Upper lobe of right lung (tissue), 1 donor: ENCODE measurements at regions of chr5 and their contacts with region 1.

Region 1: DNA sequence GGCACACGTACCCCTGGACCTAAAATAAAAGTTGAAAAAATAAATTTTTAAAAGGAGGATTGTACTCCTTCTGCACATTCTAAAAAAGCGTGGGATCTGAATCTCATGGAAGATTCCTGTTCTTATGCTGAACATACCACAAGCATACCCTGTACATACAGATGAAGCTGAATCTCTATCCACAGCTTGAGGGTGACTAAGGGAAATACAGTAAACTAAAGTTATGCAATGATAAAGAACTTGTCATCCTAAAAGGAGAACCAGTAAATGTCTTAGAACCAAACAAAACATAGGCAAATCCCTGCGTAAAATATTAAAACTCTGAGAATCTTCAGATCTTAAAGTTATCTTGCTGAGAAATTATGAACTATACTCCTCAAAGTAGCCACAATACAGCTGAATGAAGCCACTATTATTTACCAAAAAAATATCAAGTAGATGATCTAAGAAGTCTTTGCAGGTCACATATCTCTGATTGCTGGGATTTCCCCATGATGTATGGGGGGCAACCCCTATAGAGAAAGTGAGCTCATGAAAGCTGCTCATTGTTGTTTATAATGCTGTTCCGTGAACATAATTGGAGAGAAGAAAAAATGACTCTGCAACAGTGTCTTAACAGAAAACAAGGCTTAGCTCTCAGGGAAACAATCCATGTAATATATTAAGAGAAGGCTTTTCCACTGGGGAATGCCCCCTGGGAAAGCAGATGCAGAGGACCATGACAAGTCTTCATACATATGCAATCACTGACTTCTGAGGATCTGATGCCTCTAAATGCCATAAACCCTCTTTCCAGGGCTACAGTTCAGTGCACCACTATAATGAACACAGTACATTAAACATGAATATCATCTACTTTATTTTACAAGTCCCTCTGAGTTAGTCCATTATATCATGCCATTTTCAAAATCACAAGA is 210.1 kb downstream of the EPB41L4A start:
- DNase-seq: no peak
- ATAC-seq: peak; percentile 52
- H3K4me3 ChIP-seq: no peak overlapping the region
- H3K27ac ChIP-seq: no peak overlapping the region
- H3K4me1 ChIP-seq: no peaks in the 10 kb centered on the region
- H3K27me3 ChIP-seq: no peaks in the 10 kb centered on the region
- CTCF ChIP-seq: no peak

Region 2: DNA sequence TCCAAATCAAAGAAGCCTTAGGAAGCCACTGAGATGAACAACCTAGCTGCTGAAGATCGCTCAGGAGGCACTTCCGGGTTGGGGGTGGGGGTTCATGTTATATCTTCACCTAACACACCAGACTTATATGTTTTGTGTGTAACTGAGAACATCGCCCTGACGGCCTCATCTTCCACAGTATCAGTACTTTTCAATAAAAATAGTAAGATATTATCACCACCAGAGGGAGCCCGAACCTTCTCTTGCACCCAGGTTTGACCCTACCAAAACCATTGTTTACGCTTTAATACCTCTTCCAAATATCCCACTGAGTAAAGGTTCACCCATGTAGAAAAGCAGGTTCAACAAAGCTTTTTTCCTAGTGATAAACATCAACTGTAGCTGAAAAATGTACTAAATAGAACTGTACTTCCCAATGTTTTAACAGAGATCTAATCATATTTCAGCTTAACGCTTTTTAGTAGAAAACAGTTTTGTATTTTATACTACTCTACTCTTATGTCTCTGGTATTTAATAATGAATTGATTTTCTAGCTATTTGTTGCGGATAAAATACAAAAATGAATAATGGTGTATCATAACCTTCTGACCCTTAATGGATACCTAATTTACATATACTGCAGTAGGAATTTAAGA is 33.9 kb before region 1 on chr5:
- intact Hi-C with region 1: no loop called
- DNase-seq: no peak
- ATAC-seq: peak; percentile 83
- H3K4me3 ChIP-seq: no peak overlapping the region
- H3K27ac ChIP-seq: no peak overlapping the region
- H3K4me1 ChIP-seq: no peaks in the 10 kb centered on the region
- H3K27me3 ChIP-seq: no peaks in the 10 kb centered on the region
- CTCF ChIP-seq: peak; percentile 68

Region 3: DNA sequence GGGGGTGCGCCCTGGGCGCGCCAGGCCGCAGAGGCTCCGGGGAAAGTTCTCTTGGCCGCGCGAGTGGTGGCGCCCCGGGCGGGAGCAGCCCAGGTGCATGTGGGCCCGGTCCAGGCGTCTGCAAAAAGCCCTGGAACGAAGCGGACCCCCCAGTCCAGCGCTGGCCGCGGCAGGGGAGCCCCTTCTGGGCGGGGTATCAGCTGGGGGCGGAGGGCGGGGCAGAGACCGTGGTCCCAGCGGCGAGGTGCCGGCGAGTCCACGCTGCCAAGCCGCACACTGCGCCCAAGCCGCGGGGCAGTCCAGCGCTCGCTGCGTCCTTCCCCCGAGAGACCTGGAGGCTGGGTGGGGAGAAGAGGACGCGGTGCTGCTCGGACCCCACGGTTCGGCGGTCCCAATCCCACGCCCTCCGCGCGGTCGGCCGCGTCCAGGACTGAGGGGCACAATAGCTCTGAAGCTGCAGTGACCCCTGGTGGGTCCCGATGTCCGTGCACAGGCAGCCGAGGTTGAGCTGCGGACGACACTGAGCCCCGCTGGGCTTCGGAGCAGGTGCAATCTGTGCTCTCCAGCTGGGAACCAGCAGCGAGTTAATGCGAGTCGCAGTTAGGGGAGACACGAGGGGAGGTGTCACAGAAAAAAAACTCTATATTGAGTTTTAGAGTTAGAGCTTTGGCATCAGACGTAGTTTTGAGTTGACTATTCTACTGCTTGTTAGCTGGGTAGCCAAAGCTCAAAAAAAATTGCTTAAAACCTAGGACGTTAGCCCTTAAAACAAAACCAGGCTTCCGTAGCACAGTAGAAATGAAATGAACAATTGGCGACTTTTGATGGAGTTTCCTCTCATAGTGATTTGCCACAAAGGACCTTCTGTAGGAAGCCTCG is 211.3 kb after region 1 on chr5:
- intact Hi-C with region 1: loop called (anchors 5 kb)
- DNase-seq: peak; percentile 91
- ATAC-seq: peak; percentile 94
- H3K4me3 ChIP-seq: peak overlapping the region; percentile 82
- H3K27ac ChIP-seq: peak overlapping the region; percentile 87
- H3K4me1 ChIP-seq: peaks cover 6% of the 10 kb centered on the region
- H3K27me3 ChIP-seq: peaks cover 6% of the 10 kb centered on the region
- CTCF ChIP-seq: peak; percentile 87